PC-3 (cell line): ENCODE measurements at regions of chr7 and their contacts with region 1.

Region 1: DNA sequence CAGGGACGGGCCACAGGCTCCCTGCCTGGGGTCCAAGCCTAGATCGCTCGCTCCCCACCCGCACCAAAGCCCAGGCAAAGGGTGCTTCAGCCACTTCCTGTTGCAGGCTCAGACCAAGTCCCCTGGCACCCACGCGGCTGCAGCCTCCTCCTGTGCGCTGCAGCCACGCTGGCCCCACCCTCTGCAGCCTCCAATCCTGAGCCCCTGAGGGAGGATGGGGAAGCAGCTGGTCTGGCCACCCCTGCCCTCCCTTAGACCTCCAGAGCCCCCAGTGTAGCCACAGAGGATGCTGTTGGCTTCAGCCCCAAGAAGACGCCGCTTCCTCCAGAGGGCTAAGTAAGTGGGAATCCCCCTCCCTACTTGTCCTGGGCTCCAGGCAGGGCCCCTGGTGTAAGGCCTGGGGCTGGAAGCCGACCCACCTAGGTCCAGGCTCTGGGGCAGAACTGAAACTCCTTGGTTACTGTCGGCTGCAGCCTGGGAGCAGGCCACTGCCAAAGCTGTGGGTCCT is 9.4 kb downstream of the LIMK1 start:
- DNase-seq: no peak
- ATAC-seq: no peak
- H3K4me3 ChIP-seq: no peak overlapping the region
- H3K27ac ChIP-seq: peak overlapping the region; percentile 73; the same call in 1 of the 2 replicates
- H3K4me1 ChIP-seq: peaks cover 31% of the 10 kb centered on the region
- H3K27me3 ChIP-seq: no peaks in the 10 kb centered on the region
- CTCF ChIP-seq: no peak

Region 2: DNA sequence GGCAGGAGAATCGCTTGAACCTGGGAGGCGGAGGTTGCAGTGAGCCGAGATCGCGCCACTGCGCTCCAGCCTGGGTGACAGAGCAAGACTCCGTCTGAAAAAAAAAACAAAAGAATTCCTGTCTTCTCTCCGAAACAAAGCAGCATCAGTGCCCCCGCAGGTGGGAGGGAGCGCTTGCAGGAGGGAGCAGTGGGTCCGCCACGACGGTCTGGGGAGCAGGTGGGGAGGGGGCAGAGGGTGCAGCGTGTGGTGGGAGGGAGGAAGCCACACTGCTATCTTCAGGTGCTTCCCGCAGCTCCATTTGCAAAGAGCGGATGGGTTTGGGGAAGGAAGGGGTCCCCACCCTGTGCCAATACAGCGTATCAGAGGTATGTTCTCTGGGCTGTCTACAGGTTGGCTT is 22.3 kb after region 1 on chr7:
- CTCF ChIA-PET with region 1: no interaction called
- POLR2A ChIA-PET with region 1: interaction called, 11 read pairs
- intact Hi-C with region 1: no loop called
- DNase-seq: no peak
- ATAC-seq: no peak
- H3K4me3 ChIP-seq: no peak overlapping the region
- H3K27ac ChIP-seq: no peak overlapping the region
- H3K4me1 ChIP-seq: no peaks in the 10 kb centered on the region
- H3K27me3 ChIP-seq: no peaks in the 10 kb centered on the region
- CTCF ChIP-seq: peak; percentile 35; the same call in 1 of the 2 replicates